ENCODE measurements at regions of chr1 and their contacts with region 1.

Region 1: DNA sequence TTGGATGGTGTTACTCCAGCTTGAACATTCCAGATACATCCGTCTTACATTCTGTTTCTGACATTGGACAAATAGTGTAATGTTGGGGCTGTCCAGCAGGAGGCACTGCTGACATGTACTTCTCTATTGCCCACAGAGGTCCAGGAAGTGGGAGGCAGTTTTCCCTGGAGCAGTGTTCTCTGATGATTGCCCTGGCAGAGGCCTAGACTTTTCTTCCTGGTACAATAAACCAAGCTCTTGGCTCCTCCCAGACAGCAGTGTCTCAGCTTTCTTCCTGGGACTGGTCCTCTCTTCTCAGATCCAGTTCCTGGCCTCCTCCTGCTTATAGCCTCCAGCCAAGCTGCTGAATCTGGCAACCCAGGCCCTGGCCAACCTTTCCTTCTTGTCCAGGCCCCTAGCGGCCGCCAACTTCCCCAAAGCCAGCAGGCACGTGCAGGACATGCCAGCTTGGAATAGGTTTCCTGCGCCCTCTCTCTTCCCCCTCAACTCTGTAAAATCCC is 14.9 kb upstream of the IFNLR1 start:
- DNase-seq: peak in 1 of 2 donors; percentile 98
- H3K4me3 ChIP-seq: no peak overlapping the region
- H3K27ac ChIP-seq: peak overlapping the region; percentile 31
- H3K4me1 ChIP-seq: peaks cover 30% of the 10 kb centered on the region
- H3K27me3 ChIP-seq: no peaks in the 10 kb centered on the region
- CTCF ChIP-seq: peak; percentile 47 to 88 (median 58)
- POLR2A ChIP-seq: no peak

Region 2: GRCh38 chr1:24235921-24236781 is 34.2 kb after region 1 on chr1:
- intact Hi-C with region 1: no loop called
- DNase-seq: no peak
- H3K4me3 ChIP-seq: no peak overlapping the region
- H3K27ac ChIP-seq: no peak overlapping the region
- H3K4me1 ChIP-seq: no peaks in the 10 kb centered on the region
- H3K27me3 ChIP-seq: no peaks in the 10 kb centered on the region
- CTCF ChIP-seq: no peak
- POLR2A ChIP-seq: no peak

Region 3: GRCh38 chr1:24391882-24392603 is 190.1 kb after region 1 on chr1:
- intact Hi-C with region 1: loop called (anchors 5 kb)
- DNase-seq: peak in 1 of 2 donors; percentile 87
- H3K4me3 ChIP-seq: no peak overlapping the region
- H3K27ac ChIP-seq: peak overlapping the region; percentile 84
- H3K4me1 ChIP-seq: peaks cover 11% of the 10 kb centered on the region
- H3K27me3 ChIP-seq: no peaks in the 10 kb centered on the region
- CTCF ChIP-seq: peak; percentile 58 to 73 (median 73)
- POLR2A ChIP-seq: no peak

Region 4: GRCh38 chr1:24472527-24473251 is 270.7 kb after region 1 on chr1:
- intact Hi-C with region 1: no loop called
- DNase-seq: no peak
- H3K4me3 ChIP-seq: no peak overlapping the region
- H3K27ac ChIP-seq: no peak overlapping the region
- H3K4me1 ChIP-seq: no peaks in the 10 kb centered on the region
- H3K27me3 ChIP-seq: no peaks in the 10 kb centered on the region
- CTCF ChIP-seq: no peak
- POLR2A ChIP-seq: no peak

Region 5: DNA sequence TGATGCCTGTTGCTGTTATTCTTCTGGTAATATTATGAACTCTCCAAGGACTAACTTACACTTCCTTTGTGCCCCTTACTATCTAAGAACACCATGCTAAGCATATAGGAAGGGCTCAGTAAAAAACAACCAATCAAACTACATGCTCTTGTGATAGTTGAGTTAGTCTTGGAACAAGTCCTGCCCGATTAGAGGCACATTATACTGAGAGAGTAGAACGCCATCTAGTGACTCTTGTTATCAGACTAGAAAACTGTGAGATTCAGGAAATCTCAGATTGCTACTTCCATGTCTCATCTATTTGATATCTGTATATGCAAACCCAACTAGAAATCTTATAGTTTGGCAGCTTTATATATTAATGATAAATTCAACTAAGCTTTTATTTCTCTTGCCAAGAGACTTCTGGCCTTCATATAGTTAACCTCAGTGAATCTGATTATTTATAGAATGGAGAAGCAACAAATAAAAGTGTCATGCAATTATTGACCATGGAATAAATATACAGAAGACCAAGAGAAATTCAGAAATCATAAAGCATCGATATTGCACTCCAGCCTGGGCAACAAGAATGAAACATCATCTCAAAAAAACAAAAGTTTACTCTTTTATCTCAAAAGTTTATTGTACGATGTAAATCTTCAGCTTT is 433.3 kb after region 1 on chr1:
- intact Hi-C with region 1: loop called (anchors 10 kb)
- DNase-seq: no peak
- H3K4me3 ChIP-seq: no peak overlapping the region
- H3K27ac ChIP-seq: no peak overlapping the region
- H3K4me1 ChIP-seq: no peaks in the 10 kb centered on the region
- H3K27me3 ChIP-seq: no peaks in the 10 kb centered on the region
- CTCF ChIP-seq: peak in 1 of 3 experiments; percentile 40
- POLR2A ChIP-seq: no peak